ENCODE measurements at regions of chr15 and their contacts with region 1.

Region 1: DNA sequence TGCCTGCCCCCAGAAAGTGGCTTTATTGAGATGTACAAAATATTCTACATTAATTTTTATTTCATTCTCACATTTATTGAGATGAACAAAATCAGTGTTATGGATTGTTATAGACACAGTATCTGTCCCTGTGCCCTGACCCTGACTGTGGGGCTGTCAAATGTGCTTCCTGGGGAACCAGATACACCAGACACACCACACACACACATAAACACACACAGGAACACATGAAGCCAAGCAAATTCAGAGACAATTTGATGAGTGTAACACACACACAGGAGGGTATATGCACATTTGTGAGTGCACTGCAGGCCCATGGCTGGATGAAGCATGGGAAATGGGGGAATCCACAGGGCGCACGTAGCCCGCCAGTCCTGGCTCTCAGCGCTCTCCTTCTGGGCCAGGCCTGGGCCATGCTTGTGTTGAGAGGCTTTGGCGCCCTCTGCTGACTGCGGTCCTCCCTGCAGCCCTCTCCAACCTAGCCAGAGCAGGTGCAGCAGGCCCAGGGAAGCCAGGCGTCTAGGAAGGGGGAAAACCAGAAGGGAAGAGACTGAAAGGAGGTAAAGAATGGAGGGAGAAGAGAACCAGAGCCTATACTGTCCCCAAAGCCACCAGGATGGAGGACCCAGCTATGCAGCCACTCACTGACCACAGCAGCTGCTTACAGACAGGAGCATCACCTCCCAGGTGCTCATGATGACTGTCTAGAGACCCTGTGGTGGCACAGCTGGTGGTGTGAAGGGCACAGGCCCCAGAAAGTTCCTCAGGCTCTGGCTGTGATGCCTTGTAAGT is 18.0 kb upstream of the LOXL1 start:
- DNase-seq: peak; percentile 83
- ATAC-seq: peak; percentile 96 to 98

Region 2: GRCh38 chr15:73305331-73306211 is 602.7 kb before region 1 on chr15:
- intact Hi-C with region 1: loop called in 1 of 2 experiments (anchors 10 kb)
- DNase-seq: peak; percentile 42
- ATAC-seq: peak; percentile 81 to 85

Region 3: GRCh38 chr15:73694419-73694818 is 213.8 kb before region 1 on chr15:
- intact Hi-C with region 1: no loop called
- DNase-seq: no peak
- ATAC-seq: peak; percentile 43 to 56

Region 4: GRCh38 chr15:73704869-73705645 is 203.2 kb before region 1 on chr15:
- intact Hi-C with region 1: loop called (anchors 5 to 10 kb)
- DNase-seq: peak; percentile 59
- ATAC-seq: peak; percentile 50 to 58

Region 5: DNA sequence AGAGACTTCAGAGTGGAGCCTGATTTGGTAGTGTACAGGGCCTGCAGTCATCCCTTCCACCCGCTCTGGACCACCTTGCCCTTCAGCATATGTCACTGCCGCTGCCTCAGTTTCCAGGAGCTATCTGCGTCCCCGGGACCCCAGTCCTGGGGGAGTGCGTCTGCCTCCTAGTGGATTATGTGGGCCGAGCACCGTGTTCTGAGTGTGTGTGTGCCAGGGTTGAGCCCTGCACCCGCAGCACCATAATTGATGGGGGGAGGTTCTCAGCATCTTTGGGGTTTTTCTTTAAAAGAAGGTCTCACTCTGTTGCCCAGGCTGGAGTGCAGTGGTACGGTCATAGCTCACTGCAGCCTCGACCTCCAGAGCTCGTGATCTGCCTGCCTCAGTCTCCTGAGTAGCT is 190.4 kb before region 1 on chr15:
- intact Hi-C with region 1: loop called in 1 of 2 experiments (anchors 10 kb)
- DNase-seq: no peak
- ATAC-seq: no peak

Region 6: DNA sequence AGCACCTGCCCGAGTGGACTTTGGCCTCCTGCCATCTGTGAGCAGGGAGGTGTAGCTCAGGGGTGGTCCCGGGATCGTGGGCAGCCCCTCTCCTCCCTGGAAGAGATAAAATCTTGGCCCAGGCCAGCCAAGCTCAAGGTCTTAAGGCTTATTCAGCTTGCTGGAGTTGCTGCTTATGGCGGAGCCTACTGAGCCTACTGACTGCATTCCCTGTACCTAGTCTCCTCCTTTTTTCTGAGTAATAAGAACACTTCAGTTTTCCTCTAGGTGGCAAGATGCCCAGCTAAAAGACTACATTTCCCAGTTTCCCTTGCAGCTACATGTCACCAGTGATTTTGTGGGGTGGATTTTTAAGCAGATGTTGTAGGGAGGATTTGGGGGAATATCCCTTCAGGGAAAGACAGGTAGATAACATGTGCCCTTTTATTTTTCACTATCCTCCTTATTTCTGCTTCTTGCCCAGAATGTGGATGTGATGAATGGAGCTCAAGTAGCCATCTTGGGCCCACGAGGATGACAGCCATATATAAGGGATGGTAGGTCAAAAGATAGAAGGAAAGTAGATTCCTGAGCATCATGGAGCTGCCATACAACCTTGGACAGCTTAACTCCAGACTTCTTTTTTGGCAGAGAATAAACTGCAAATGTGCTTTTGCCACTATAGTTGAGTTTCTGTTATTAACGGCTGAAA is 113.6 kb before region 1 on chr15:
- intact Hi-C with region 1: loop called in 1 of 2 experiments (anchors 5 kb)
- DNase-seq: no peak
- ATAC-seq: no peak

Region 7: DNA sequence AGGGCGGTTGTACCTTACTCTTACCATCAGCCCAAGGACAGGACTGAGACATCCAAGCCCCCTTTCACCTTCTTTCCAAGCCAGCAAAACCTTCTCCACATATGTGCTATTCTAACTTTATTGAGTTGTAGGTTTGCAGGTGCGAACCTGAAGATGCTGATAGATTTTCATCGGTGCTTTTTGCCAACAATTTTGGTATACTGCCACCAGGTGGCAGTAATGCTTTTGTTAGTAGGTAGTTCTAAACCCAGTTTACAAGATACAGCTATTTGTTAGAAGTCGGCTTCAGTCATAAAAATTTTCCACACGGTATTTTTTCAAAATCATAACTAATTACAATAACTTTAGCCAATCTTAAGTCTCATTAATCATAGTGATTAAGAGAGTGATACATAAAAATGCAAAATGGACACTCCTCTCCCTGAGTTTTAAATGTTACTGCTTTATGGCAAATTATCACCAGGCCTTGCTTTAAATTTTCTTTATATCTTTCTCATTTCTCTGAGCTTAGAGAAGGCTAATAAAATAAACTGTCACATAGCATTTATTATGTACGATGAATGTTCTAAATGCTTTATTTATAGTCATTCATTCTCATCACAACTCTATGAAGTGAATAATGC is 34.2 kb before region 1 on chr15:
- intact Hi-C with region 1: loop called in 1 of 2 experiments (anchors 5 kb)
- DNase-seq: no peak
- ATAC-seq: no peak